Activated CD4-positive, alpha-beta T cell treated with anti-CD3 and anti-CD28 coated beads for 36 hours (primary cell): ENCODE measurements at regions of chr14 and their contacts with region 1.

Region 1: GRCh38 chr14:91817566-91818325 is 49.6 kb downstream of the TC2N start:
- DNase-seq: peak; percentile 19
- ATAC-seq: peak; percentile 80
- H3K4me3 Mint-ChIP-seq: peak overlapping the region; percentile 13
- H3K27ac Mint-ChIP-seq: peak overlapping the region; percentile 71
- H3K4me1 Mint-ChIP-seq: peaks cover 53% of the 10 kb centered on the region
- H3K27me3 Mint-ChIP-seq: no peaks in the 10 kb centered on the region

Region 2: DNA sequence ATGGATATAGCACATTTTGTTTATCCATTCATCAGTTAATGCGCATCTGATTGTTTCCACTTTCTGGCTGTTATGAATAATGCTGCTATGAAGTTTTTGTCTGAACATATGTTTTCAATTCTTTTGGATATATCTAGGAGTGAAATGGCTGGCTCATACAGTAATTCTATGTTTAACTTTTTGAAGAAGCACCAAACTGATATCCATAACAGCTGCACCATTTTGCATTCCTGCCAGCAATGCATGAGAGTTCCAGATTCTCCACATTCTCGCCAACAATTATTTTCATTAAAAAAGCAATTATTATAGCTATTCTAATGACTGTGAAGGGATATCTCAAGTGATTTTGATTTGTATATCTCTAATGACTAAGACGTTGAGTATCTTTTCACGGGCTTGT is 217.8 kb before region 1 on chr14:
- CTCF ChIA-PET with region 1: no interaction called
- POLR2A ChIA-PET with region 1: interaction called, 14 read pairs
- intact Hi-C with region 1: no loop called
- DNase-seq: no peak
- ATAC-seq: no peak
- H3K4me3 Mint-ChIP-seq: no peak overlapping the region
- H3K27ac Mint-ChIP-seq: no peak overlapping the region
- H3K4me1 Mint-ChIP-seq: no peaks in the 10 kb centered on the region
- H3K27me3 Mint-ChIP-seq: no peaks in the 10 kb centered on the region